Kidney (tissue), 22 donors: ENCODE measurements at regions of chr6 and their contacts with region 1.

Region 1: GRCh38 chr6:129719692-129720091 is 9.7 kb upstream of the ARHGAP18 start:
- DNase-seq: peak in 1 of 5 donors; percentile 58
- H3K4me3 ChIP-seq: no peak overlapping the region
- H3K27ac ChIP-seq: no peak overlapping the region
- H3K4me1 ChIP-seq: no peaks in the 10 kb centered on the region
- H3K27me3 ChIP-seq: no peaks in the 10 kb centered on the region
- CTCF ChIP-seq: no peak

Region 2: DNA sequence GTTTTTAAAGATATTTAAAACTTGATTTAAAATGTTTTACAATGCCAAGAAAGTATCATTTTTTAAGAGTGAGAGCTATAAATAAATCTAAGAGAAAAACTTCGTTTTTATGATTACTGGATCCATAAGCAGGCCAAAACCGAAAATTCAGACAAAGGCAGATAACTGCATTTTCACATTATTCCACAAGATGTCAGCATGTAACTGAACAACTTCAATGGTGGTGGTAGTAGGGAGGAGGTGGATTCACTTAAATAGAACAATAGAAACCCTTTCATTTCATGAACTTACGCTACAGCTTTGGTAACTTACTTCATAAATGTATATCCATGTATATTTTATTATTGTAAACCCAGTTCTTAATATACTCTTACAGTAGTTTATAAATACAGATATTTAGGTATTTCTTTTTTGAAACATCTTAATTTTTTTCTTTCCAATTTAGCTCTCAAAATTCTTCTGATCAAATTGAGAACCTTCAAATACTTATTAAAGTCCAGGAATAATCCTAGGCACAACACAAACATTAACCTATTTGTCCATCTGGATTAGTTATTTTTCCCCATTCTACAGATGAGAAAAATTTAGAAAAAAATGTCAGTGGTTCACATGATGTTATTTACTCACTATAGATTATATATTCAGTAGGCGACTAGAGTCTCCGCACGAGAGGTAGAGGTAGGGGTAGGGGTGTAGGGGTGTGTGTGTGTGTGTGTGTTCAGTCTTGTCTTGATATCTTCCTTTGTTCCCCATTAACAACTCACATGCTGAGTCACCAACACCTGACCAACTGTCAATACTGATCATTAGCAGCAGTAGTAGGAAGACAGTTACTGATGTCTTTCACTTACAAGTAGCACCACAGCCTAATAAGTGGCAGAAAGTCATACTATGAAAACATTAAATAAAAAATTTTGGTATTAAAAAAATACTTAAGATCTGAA is 121.2 kb before region 1 on chr6:
- intact Hi-C with region 1: loop called (anchors 10 kb)
- DNase-seq: peak in 3 of 5 donors; percentile 15 to 89 (median 83)
- H3K4me3 ChIP-seq: no peak overlapping the region
- H3K27ac ChIP-seq: no peak overlapping the region
- H3K4me1 ChIP-seq: peaks cover 0 to 14% (median 3%) of the 10 kb centered on the region in 3 donors
- H3K27me3 ChIP-seq: no peaks in the 10 kb centered on the region
- CTCF ChIP-seq: peak; percentile 81